Sigmoid colon (tissue), 7 donors: ENCODE measurements at regions of chr20 and their contacts with region 1.

Region 1: DNA sequence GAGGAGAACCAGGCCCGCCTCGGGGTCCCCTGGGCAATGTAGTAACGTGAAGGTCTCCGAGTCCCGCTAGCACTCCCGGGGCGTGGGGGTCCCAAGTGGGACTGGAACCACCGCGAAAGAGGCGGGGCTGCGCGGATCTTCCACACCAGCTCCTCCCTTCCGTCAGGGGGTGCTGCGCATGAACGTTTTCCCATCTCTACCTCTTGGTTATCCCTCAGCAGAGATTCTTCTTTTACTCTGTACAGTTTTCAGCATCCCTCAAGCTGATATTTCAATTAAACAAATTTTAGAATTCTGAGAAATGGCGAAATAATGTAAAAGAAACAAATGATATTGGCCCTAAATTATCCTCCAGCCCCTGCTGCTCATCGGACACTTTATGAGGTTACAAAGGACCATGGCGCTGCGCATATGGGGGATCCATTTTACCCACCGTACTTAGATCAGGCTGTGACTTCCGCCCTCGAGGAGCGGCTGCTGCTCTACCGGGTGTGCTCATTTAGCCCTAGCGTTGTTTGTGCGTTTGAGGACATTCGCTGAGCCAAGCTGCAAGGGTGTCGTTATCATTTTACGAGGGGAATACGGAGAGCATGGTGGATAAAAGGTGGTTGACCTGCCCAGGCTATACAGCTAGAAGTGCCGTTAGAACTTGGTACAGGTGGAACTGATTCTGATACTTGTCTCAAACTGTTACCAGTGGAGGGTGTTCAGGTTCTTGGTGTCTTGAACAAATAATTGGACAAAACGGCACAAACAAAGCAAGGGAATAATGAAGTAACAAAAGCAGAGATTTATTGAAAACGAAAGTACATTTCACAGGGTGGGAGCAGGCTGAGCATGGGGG is 75.2 kb upstream of the CHD6 start:
- DNase-seq: peak; percentile 90
- H3K4me3 ChIP-seq: peak overlapping the region; percentile 63 to 87 (median 66)
- H3K27ac ChIP-seq: peak overlapping the region; percentile 85 to 92 (median 88)
- H3K4me1 ChIP-seq: peaks cover 0 to 14% (median 6%) of the 10 kb centered on the region in 4 donors
- H3K27me3 ChIP-seq: no peaks in the 10 kb centered on the region
- CTCF ChIP-seq: peak; percentile 18 to 54 (median 33)
- EP300 ChIP-seq: no peak
- POLR2A ChIP-seq: peak; percentile 45 to 51

Region 2: GRCh38 chr20:41136680-41137613 is 556.4 kb before region 1 on chr20 and contains the start of gene PLCG1:
- intact Hi-C with region 1: loop called (anchors 10 kb)
- DNase-seq: peak; percentile 95
- H3K4me3 ChIP-seq: peak within 1 kb of the TSS; percentile 57 to 83 (median 73)
- H3K27ac ChIP-seq: peak within 1 kb of the TSS; percentile 94 to 96 (median 96)
- H3K4me1 ChIP-seq: peaks cover 0 to 47% (median 38%) of the 10 kb centered on the region in 4 donors
- H3K27me3 ChIP-seq: no peaks in the 10 kb centered on the region
- CTCF ChIP-seq: no peak
- EP300 ChIP-seq: no peak
- POLR2A ChIP-seq: peak; percentile 29 to 66
- total RNA-seq, gene PLCG1: 48.5 to 152 (median 67.0) TPM

Region 3: GRCh38 chr20:41509316-41510200 is 183.8 kb before region 1 on chr20:
- intact Hi-C with region 1: loop called (anchors 5 kb)
- DNase-seq: peak; percentile 90
- H3K4me3 ChIP-seq: no peak overlapping the region
- H3K27ac ChIP-seq: peak overlapping the region; percentile 50 to 76 (median 64)
- H3K4me1 ChIP-seq: peaks cover 0 to 67% (median 55%) of the 10 kb centered on the region in 4 donors
- H3K27me3 ChIP-seq: no peaks in the 10 kb centered on the region
- CTCF ChIP-seq: no peak
- EP300 ChIP-seq: no peak
- POLR2A ChIP-seq: no peak

Region 4: DNA sequence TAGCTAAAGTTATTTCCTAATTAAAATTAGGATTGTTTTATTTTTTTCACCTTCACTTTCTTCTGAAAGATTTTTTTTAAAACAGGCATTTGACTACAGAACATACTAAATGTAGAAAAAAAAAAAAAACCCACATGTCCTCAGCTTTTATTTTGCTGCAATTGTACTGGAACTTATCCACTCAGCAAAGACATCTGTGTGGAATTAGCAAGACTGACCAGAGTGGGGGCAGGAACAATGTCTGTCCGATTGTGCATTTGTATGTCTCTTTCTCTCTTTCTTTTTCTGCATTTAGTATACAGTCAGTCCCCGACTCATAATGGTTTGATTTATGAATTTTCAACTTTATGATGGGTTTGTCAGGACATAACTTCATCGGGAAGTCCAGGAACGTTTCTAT is 152.4 kb before region 1 on chr20:
- intact Hi-C with region 1: no loop called
- DNase-seq: no peak
- H3K4me3 ChIP-seq: no peak overlapping the region
- H3K27ac ChIP-seq: no peak overlapping the region
- H3K4me1 ChIP-seq: no peaks in the 10 kb centered on the region
- H3K27me3 ChIP-seq: no peaks in the 10 kb centered on the region
- CTCF ChIP-seq: no peak
- EP300 ChIP-seq: no peak
- POLR2A ChIP-seq: no peak

Region 5: DNA sequence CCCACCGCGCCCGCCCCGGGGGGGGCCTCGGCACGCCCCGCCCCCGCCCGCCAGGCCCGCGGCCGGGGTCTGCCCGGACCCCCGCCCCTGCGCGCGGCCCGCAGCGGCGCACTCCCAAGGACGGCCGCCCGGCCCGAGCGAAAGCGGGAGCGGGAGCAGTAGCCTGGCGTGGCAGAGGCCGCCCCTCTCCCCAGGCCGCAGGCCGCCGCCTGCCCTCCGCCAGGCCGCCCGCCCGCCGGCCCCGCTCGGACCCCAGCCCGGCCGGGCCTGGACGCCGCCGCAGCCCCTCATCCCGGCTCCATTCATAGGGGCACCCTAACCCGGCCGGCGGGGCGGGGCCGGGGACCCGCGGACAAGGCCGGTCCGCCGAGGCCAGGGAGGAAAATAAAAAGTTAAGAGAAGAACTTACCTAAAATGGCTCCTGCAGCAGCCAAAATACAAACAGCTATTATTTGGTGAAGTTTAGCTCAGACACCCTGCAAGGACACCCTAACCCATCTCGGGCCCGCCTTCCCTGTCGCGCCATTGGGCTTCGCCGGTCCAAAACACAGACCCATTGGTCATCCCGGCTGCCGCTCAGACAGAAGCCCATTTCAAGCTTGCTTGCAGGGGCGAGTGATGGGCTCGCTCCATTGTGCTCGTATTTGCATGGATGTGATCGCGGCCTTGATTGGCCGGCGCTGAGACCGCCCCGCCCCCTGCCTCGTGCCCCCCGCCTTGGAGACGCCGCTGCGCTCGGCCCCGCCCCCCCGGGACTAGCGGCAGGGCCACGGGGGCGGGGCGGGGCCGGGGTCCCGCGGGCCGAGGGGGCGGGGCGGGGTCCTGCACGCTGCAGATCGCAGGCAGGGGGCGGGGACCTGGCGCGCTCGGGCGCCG is 75.2 kb before region 1 on chr20 and contains the start of gene CHD6:
- intact Hi-C with region 1: loop called (anchors 1 kb)
- DNase-seq: peak; percentile 100
- H3K4me3 ChIP-seq: peak within 1 kb of the TSS; percentile 69 to 95 (median 80)
- H3K27ac ChIP-seq: peak within 1 kb of the TSS; percentile 85 to 96 (median 86)
- H3K4me1 ChIP-seq: peaks cover 0 to 39% (median 31%) of the 10 kb centered on the region in 4 donors
- H3K27me3 ChIP-seq: no peaks in the 10 kb centered on the region
- CTCF ChIP-seq: no peak
- EP300 ChIP-seq: no peak
- POLR2A ChIP-seq: no peak
- total RNA-seq, gene CHD6: 29.9 to 40.2 (median 33.1) TPM